Mammary epithelial cell (primary cell): ENCODE measurements at regions of chr18 and their contacts with region 1.

Region 1: DNA sequence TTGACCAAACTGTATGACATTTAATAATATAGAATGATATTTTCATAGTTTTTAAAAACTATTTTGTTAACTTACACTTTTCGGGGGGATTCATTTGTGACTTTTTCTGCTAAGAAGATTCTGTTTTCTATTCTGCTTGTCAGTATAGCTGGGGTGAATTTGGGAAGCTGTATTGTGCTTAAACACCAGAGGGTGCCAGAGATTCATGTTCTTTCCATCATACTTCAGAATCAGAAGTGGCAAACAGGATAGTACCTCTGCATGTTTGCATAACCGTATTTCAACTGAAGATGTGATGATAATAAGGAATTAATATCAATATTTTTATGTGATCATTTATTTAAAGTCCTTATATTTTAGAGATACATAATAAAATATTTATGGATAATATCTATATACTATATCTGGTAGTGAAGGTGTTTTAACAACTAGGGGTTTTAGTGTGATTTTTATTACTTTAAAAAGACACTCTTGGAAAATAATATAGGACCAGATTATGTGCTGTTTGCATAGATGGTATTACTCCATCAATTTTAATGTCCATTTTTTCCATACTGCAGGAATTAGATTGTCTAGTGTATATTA is 81.0 kb downstream of the TAF4B start:
- DNase-seq: peak; percentile 45
- H3K4me3 ChIP-seq: no peak overlapping the region
- H3K27ac ChIP-seq: no peak overlapping the region
- H3K4me1 ChIP-seq: peaks cover 4% of the 10 kb centered on the region
- H3K27me3 ChIP-seq: no peaks in the 10 kb centered on the region
- CTCF ChIP-seq: peak; percentile 66 to 76

Region 2: GRCh38 chr18:25921677-25922421 is 385.4 kb before region 1 on chr18:
- CTCF ChIA-PET with region 1: no interaction called
- dilution Hi-C with region 1: no loop called
- in situ Hi-C with region 1: no loop called
- intact Hi-C with region 1: loop called (anchors 10 kb)
- DNase-seq: peak; percentile 31
- H3K4me3 ChIP-seq: no peak overlapping the region
- H3K27ac ChIP-seq: no peak overlapping the region
- H3K4me1 ChIP-seq: no peaks in the 10 kb centered on the region
- H3K27me3 ChIP-seq: no peaks in the 10 kb centered on the region
- CTCF ChIP-seq: peak; percentile 65 to 80

Region 3: DNA sequence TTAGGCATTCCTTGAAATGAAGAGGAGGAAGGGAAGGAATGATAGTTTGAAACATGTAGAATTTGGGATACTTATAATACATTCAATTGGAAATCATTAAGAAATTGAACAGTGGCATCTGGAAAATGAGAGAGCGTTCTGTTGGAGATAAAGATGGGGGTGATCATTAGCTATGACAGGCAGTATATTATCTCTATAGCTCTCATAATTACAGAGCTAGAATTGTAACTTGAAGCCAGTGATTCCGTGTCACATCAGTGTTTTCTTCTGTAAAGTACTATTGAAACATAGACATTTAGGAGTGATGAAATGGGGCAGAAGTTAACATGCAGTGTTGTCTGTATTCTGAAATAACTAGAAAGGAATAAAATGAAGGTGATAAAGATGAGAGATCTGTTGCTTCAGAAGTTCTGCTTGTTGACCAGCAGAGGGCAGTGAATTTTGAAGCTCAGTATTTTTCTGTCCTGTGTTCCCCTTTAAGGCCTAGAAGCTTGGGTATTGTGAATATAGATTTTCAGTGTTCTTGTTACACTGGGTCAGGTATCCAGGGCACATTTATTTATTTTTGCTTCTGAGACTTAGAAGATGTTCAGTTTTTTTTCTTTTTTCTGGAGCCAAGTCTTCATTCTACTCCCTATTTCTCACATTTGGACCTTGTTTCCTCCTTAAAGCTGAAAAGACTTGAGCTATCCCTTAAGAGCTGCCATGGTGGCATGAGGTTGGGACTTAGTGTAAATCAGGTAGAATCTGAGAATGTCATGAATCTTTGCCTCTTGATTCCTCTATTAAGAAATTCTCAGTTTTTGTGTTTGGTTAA is 76.4 kb after region 1 on chr18:
- CTCF ChIA-PET with region 1: interaction called, 6 read pairs
- dilution Hi-C with region 1: no loop called
- in situ Hi-C with region 1: no loop called
- intact Hi-C with region 1: loop called (anchors 5 kb)
- DNase-seq: peak; percentile 33
- H3K4me3 ChIP-seq: no peak overlapping the region
- H3K27ac ChIP-seq: no peak overlapping the region
- H3K4me1 ChIP-seq: peaks cover 14% of the 10 kb centered on the region
- H3K27me3 ChIP-seq: no peaks in the 10 kb centered on the region
- CTCF ChIP-seq: peak; percentile 70 to 71

Region 4: GRCh38 chr18:26556573-26556972 is 249.3 kb after region 1 on chr18:
- CTCF ChIA-PET with region 1: no interaction called
- dilution Hi-C with region 1: no loop called
- in situ Hi-C with region 1: no loop called
- intact Hi-C with region 1: no loop called
- DNase-seq: peak; percentile 48
- H3K4me3 ChIP-seq: no peak overlapping the region
- H3K27ac ChIP-seq: no peak overlapping the region
- H3K4me1 ChIP-seq: peaks cover 13% of the 10 kb centered on the region
- H3K27me3 ChIP-seq: no peaks in the 10 kb centered on the region
- CTCF ChIP-seq: no peak

Region 5: GRCh38 chr18:26648509-26649192 is 341.4 kb after region 1 on chr18:
- CTCF ChIA-PET with region 1: no interaction called
- dilution Hi-C with region 1: no loop called
- in situ Hi-C with region 1: loop called in 1 of 2 experiments (anchors 10 kb)
- intact Hi-C with region 1: loop called (anchors 2 kb)
- DNase-seq: no peak
- H3K4me3 ChIP-seq: no peak overlapping the region
- H3K27ac ChIP-seq: no peak overlapping the region
- H3K4me1 ChIP-seq: no peaks in the 10 kb centered on the region
- H3K27me3 ChIP-seq: no peaks in the 10 kb centered on the region
- CTCF ChIP-seq: no peak

Region 6: DNA sequence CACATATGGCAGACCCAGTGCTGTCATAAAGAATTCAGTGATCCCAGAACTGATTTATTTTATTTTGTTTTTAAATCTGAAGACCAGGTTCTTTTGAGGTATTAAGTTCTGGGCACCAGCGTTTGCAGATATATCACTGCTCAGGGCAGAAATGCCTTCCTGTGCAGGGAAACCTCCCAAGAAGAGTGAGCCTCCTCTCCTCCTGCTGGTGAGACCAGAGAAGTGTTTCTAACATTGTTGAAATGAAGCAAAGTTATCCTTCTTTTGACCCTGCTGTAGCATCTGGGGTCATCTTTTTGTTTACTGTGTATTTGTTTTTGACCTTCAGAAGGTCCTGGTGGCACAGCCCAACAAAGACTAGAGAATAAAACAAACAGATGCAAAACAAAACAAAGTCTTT is 464.2 kb after region 1 on chr18:
- CTCF ChIA-PET with region 1: no interaction called
- dilution Hi-C with region 1: no loop called
- in situ Hi-C with region 1: loop called in 1 of 2 experiments (anchors 25 kb)
- intact Hi-C with region 1: loop called (anchors 5 kb)
- DNase-seq: no peak
- H3K4me3 ChIP-seq: no peak overlapping the region
- H3K27ac ChIP-seq: no peak overlapping the region
- H3K4me1 ChIP-seq: no peaks in the 10 kb centered on the region
- H3K27me3 ChIP-seq: peaks cover 5% of the 10 kb centered on the region
- CTCF ChIP-seq: peak; percentile 43 to 72

Region 7: GRCh38 chr18:27005589-27005988 is 698.3 kb after region 1 on chr18:
- CTCF ChIA-PET with region 1: no interaction called
- dilution Hi-C with region 1: no loop called
- in situ Hi-C with region 1: no loop called
- intact Hi-C with region 1: loop called (anchors 5 kb)
- DNase-seq: no peak
- H3K4me3 ChIP-seq: no peak overlapping the region
- H3K27ac ChIP-seq: no peak overlapping the region
- H3K4me1 ChIP-seq: no peaks in the 10 kb centered on the region
- H3K27me3 ChIP-seq: no peaks in the 10 kb centered on the region
- CTCF ChIP-seq: peak; percentile 50 to 54